ENCODE measurements at regions of chr6 and their contacts with region 1.

Region 1: DNA sequence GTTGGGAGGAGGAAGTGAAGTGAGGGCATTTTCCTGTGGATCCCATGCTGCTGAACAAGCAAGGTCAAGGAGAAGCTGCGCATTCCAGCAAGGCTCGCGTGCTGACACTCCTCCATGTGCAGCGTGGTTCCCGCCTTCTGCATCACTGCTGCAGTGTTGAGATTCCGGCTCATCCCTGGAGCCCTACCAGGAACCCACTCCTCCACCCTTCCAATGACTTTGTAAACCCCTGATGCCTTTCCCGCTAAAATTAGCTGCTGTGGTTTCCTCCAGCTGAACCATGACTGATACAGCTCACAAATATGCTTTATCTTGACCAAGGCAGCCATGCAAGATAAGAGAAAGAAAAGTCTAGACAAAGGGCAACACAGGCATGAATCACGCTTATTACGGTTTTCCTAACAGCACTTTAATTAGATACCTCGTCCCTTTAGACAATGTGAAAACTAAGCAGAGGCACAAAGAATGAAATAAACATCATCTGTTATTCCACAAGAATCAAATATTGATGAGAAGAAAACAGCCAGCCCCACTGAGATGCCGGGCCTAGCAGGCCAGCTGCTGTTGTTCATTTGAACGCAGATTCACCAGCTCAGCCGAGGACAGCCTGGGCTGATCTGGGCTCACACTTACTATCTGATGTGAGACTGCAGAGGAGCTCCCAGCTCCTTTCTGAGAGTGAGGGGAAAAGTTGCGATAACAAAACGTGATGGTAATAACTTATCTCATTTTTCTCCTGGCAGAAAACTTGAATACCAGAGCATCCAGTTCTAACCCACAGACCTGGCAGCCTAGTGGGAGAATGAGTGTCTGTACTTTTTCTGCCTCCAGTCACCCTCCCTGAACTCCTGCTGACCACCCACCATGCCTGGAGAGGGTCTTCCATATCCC is 14.2 kb upstream of the BNIP5 start:
- DNase-seq: no peak
- CTCF ChIP-seq: no peak

Region 2: DNA sequence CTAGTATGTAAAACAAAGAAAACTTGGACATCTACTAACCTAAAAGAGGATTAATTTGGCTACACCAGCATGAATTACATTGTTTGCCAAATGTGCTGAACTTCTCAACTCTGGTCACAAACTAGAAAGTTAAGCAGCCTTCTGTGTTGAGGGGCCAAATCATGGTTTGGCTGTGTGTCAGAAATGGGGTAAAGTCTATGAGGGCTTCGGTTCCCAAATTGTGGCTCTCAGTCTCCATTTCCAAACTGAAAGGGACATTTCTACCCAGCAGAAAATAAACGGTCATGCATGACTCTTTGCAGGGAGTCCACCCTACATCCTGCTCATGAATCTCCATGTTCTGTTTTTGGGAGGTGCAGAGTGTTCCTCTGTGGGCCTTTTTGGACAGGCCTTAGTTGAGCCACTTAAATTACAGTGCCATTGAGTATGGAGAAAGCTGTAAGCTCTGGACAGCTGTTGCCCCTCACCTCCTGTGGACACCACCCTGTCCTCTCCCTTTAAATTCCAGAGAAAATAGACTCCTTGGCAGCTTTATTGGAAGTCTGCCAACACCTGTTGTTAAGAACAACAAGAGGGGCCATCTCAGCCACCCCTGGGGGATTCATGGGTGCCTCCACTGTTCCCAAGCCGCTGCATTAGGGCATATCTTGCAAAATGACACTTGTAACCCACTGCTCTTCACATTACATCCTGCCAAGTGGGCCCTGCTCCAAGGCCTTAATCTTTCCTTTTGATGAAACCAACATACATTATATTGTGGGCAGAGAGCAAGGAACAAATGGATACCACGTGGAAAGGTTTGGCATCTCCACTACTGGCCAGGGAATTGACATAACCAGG is 1621.1 kb before region 1 on chr6:
- in situ Hi-C with region 1: no loop called
- DNase-seq: no peak
- CTCF ChIP-seq: no peak

Region 3: GRCh38 chr6:36290661-36291620 is 60.0 kb before region 1 on chr6:
- in situ Hi-C with region 1: loop called (anchors 10 kb)
- DNase-seq: no peak
- CTCF ChIP-seq: no peak

Region 4: DNA sequence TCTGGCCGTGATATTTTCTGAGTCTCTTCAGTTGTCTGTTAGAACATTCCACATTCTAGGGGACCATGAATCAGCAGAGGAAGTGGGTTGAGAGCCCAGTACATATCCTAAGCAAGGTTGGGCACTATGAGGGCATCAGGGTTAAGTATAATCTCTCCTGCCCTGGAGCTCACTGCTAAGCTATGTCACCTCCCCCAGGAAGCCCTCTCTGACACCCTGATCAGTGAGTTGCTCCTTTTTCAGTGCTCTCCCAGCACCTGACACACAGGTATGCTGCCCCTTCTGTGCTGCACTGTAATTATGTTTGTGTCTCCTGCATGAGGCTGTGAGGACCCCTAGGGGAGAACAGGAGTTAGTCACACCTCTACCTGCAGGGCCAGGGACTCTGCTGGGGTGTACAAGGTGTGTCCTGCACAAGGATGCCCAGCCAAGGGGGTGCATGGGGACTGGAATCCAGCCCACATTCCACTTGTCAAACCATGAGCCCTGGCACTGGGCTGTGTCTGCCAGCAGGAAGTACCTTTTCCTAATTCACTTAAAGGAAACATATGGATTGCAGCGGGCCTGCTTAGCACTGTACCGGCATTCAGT is 350.6 kb after region 1 on chr6:
- in situ Hi-C with region 1: no loop called
- DNase-seq: peak; percentile 56
- CTCF ChIP-seq: peak; percentile 47

Measured in GM13977 (cell line).